Activated naive CD4-positive, alpha-beta T cell treated with anti-CD3 and anti-CD28 coated beads for 36 hours (primary cell): ENCODE measurements at regions of chr5 and their contacts with region 1.

Region 1: GRCh38 chr5:142324871-142325724 is at the start of gene SPRY4:
- DNase-seq: peak; percentile 95
- H3K4me3 Mint-ChIP-seq: peak within 1 kb of the TSS; percentile 85
- H3K27ac Mint-ChIP-seq: peak within 1 kb of the TSS; percentile 18
- H3K4me1 Mint-ChIP-seq: peaks cover 28% of the 10 kb centered on the region
- H3K27me3 Mint-ChIP-seq: peaks cover 55% of the 10 kb centered on the region
- total RNA-seq, gene SPRY4: 0.31 to 0.67 TPM

Region 2: DNA sequence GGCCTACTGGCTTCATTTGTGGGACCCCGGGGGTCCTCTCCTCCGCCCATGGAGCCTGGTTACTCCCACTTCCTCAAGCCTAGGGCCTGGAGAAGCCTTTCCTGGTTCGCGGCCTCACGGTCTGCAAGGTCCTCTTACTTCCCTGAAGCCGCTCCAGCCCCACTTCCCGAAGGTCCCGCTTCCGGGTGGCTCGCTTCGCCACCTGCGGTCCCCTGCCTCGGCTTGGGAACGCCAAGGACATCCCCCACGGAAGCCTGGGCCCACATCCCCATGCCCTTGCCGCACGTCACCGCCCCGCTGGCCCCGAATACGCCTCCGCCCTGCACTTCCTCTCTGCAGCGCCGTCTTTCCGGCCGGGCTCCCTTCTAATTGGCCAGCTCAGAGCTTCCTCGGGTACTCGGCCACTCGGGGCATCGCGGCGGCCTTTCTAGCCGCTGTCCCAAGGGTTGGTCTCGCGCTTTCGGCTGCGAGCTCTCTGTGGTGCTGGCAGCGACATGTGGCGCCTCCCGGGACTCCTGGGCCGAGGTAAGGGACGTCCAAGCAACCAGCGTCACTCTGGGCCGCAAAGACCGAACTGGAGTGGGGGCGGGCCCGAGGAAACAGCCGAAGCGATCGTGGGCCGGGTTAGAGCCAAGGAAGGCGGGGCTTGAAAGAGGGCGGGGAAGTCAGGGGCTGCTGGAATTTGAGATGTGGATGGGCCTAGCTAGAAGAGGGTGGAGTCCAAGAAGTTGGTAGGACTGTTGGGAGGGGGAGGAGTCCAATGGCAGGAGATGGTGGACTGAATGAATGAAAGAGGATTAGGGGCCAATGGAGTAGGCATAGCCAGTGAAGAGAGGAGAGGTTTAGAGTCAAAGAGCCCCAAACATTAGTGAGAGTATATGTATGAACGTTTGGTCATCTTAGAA is 401.4 kb before region 1 on chr5 and contains the start of gene DELE1:
- CTCF ChIA-PET with region 1: no interaction called
- intact Hi-C with region 1: loop called (anchors 1 kb)
- DNase-seq: peak; percentile 95
- H3K4me3 Mint-ChIP-seq: peak within 1 kb of the TSS; percentile 90
- H3K27ac Mint-ChIP-seq: peak within 1 kb of the TSS; percentile 93
- H3K4me1 Mint-ChIP-seq: peaks cover 18% of the 10 kb centered on the region
- H3K27me3 Mint-ChIP-seq: no peaks in the 10 kb centered on the region
- total RNA-seq, gene DELE1: 48.0 to 50.6 TPM

Region 3: GRCh38 chr5:142053426-142054151 is 271.5 kb before region 1 on chr5:
- CTCF ChIA-PET with region 1: no interaction called
- intact Hi-C with region 1: no loop called
- DNase-seq: peak; percentile 50
- H3K4me3 Mint-ChIP-seq: peak overlapping the region; percentile 10
- H3K27ac Mint-ChIP-seq: no peak overlapping the region
- H3K4me1 Mint-ChIP-seq: peaks cover 32% of the 10 kb centered on the region
- H3K27me3 Mint-ChIP-seq: no peaks in the 10 kb centered on the region

Region 4: DNA sequence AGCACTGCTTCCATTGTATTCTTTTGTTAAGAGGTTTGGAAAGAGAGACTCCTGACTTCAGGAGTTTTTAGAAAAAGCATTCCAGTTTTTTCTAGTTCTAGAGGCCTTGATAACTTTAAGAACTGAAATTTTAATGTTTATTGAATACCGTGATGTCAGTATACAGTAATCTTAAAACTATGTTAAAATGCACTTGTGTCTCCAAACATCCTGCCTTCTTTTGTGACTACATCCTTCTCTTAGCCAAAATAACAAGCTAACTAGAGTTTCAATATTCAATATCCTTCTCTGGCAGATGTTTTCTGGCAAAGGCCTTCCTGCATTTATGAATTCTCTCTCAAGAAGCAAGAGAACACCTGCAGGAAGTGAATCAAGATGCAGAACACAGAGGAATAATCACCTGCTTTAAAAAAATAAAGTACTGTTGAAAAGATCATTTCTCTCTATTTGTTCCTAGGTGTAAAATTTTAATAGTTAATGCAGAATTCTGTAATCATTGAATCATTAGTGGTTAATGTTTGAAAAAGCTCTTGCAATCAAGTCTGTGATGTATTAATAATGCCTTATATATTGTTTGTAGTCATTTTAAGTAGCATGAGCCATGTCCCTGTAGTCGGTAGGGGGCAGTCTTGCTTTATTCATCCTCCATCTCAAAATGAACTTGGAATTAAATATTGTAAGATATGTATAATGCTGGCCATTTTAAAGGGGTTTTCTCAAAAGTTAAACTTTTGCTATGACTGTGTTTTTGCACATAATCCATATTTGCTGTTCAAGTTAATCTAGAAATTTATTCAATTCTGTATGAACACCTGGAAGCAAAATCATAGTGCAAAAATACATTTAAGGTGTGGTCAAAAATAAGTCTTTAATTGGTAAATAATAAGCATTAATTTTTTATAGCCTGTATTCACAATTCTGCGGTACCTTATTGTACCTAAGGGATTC is 173.4 kb before region 1 on chr5:
- CTCF ChIA-PET with region 1: no interaction called
- intact Hi-C with region 1: loop called (anchors 2 kb)
- DNase-seq: peak; percentile 76
- H3K4me3 Mint-ChIP-seq: no peak overlapping the region
- H3K27ac Mint-ChIP-seq: no peak overlapping the region
- H3K4me1 Mint-ChIP-seq: peaks cover 15% of the 10 kb centered on the region
- H3K27me3 Mint-ChIP-seq: no peaks in the 10 kb centered on the region

Region 5: GRCh38 chr5:142432369-142432863 is 107.3 kb after region 1 on chr5:
- CTCF ChIA-PET with region 1: no interaction called
- intact Hi-C with region 1: loop called (anchors 2 kb)
- DNase-seq: peak; percentile 56
- H3K4me3 Mint-ChIP-seq: peak overlapping the region; percentile 16
- H3K27ac Mint-ChIP-seq: peak overlapping the region; percentile 71
- H3K4me1 Mint-ChIP-seq: peaks cover 26% of the 10 kb centered on the region
- H3K27me3 Mint-ChIP-seq: no peaks in the 10 kb centered on the region

Region 6: GRCh38 chr5:142441616-142442015 is 116.5 kb after region 1 on chr5:
- CTCF ChIA-PET with region 1: no interaction called
- intact Hi-C with region 1: loop called (anchors 1 kb)
- DNase-seq: peak; percentile 74
- H3K4me3 Mint-ChIP-seq: no peak overlapping the region
- H3K27ac Mint-ChIP-seq: no peak overlapping the region
- H3K4me1 Mint-ChIP-seq: peaks cover 16% of the 10 kb centered on the region
- H3K27me3 Mint-ChIP-seq: peaks cover 2% of the 10 kb centered on the region